ENCODE measurements at regions of chr9 and their contacts with region 1.

Region 1: DNA sequence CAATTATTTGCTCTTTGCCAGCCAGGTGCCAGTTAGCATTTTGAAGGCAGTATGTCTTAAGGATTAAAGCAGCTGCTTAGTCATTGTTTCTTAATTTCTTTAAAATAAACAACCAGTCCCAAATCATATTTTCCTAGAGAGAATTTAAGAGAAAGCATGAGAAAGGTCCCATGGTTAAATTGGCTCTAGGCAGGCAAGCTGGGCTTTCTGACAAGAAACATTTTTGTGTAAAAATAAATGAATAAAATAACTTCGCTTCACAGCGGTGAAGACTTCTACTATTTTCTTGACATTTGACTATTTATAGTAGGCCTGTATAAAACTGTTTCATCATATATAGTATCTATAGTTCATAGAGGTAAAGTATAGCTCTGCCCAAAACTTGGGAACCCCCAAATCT is 617.7 kb upstream of the C9orf72 start:
- DNase-seq: no peak
- H3K4me3 ChIP-seq: no peak overlapping the region
- H3K27ac ChIP-seq: no peak overlapping the region
- H3K4me1 ChIP-seq: peaks cover 10% of the 10 kb centered on the region
- H3K27me3 ChIP-seq: no peaks in the 10 kb centered on the region
- CTCF ChIP-seq: no peak

Region 2: GRCh38 chr9:28255174-28255573 is 64.2 kb after region 1 on chr9:
- CTCF ChIA-PET with region 1: no interaction called
- dilution Hi-C with region 1: no loop called
- in situ Hi-C with region 1: loop called in 1 of 2 experiments (anchors 10 kb)
- intact Hi-C with region 1: no loop called
- DNase-seq: no peak
- H3K4me3 ChIP-seq: no peak overlapping the region
- H3K27ac ChIP-seq: no peak overlapping the region
- H3K4me1 ChIP-seq: no peaks in the 10 kb centered on the region
- H3K27me3 ChIP-seq: no peaks in the 10 kb centered on the region
- CTCF ChIP-seq: no peak

Measured in mammary epithelial cell (primary cell).